Psoas muscle (tissue), 8 donors: ENCODE measurements at regions of chr20 and their contacts with region 1.

Region 1: GRCh38 chr20:58980700-58981627 is at the start of gene NELFCD:
- DNase-seq: peak; percentile 87 to 94
- ATAC-seq: peak; percentile 92 to 96 (median 94)
- H3K4me3 ChIP-seq: peak within 1 kb of the TSS; percentile 70
- H3K27ac ChIP-seq: peak within 1 kb of the TSS; percentile 93
- H3K4me1 ChIP-seq: peaks cover 35% of the 10 kb centered on the region
- H3K27me3 ChIP-seq: no peaks in the 10 kb centered on the region
- CTCF ChIP-seq: no peak
- total RNA-seq, gene NELFCD: 32.8 to 43.6 (median 34.2) TPM

Region 2: GRCh38 chr20:58890518-58891085 is 90.4 kb before region 1 on chr20:
- intact Hi-C with region 1: loop called (anchors 5 kb)
- DNase-seq: peak; percentile 85 to 88
- ATAC-seq: peak; percentile 49 to 58 (median 52)
- H3K4me3 ChIP-seq: peak overlapping the region; percentile 84
- H3K27ac ChIP-seq: peak overlapping the region; percentile 97
- H3K4me1 ChIP-seq: peaks cover 26% of the 10 kb centered on the region
- H3K27me3 ChIP-seq: no peaks in the 10 kb centered on the region
- CTCF ChIP-seq: no peak

Region 3: GRCh38 chr20:58895449-58896180 is 85.3 kb before region 1 on chr20:
- intact Hi-C with region 1: loop called (anchors 5 kb)
- DNase-seq: peak in 1 of 2 donors; percentile 64
- ATAC-seq: no peak
- H3K4me3 ChIP-seq: peak overlapping the region; percentile 26
- H3K27ac ChIP-seq: peak overlapping the region; percentile 50
- H3K4me1 ChIP-seq: peaks cover 75% of the 10 kb centered on the region
- H3K27me3 ChIP-seq: no peaks in the 10 kb centered on the region
- CTCF ChIP-seq: no peak

Region 4: DNA sequence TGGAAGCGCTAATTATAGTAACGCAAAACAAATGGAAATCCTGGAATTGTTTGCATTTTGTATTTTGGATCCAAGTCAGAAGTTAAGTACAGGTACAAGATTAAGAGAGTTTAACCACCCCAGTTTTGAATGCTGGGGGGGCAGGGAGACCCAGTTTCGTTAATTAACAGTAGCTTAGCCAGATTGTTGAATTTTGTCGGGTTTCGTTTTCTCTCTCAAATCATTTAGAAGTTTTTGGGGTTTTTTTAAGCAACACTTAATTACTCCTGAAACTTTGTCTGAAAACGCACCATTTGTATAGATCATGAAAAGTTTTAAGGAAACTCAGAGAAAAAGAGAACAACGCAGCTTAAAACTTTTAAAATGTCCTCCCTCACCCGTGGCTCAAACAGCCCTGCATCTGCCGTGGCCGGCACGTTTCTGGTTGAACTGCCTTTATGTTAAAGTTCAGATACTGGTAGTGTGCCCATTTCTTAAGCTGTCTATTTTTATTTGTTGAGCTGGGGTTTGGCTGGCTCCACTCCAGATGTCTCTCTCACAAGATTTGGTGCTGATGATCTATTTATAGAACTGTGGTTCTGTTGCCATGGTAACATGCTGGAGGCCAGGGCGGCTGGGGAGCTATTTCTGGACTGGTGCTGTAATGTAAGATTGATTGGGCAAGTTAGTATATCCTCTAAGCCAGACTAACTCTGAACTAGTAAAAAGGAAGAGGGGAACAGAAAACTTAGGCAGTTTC is 73.4 kb before region 1 on chr20:
- intact Hi-C with region 1: loop called in 1 of 2 experiments (anchors 5 kb)
- DNase-seq: peak; percentile 85 to 93
- ATAC-seq: peak; percentile 94 to 97 (median 96)
- H3K4me3 ChIP-seq: peak overlapping the region; percentile 50
- H3K27ac ChIP-seq: peak overlapping the region; percentile 88
- H3K4me1 ChIP-seq: peaks cover 48% of the 10 kb centered on the region
- H3K27me3 ChIP-seq: no peaks in the 10 kb centered on the region
- CTCF ChIP-seq: no peak

Region 5: DNA sequence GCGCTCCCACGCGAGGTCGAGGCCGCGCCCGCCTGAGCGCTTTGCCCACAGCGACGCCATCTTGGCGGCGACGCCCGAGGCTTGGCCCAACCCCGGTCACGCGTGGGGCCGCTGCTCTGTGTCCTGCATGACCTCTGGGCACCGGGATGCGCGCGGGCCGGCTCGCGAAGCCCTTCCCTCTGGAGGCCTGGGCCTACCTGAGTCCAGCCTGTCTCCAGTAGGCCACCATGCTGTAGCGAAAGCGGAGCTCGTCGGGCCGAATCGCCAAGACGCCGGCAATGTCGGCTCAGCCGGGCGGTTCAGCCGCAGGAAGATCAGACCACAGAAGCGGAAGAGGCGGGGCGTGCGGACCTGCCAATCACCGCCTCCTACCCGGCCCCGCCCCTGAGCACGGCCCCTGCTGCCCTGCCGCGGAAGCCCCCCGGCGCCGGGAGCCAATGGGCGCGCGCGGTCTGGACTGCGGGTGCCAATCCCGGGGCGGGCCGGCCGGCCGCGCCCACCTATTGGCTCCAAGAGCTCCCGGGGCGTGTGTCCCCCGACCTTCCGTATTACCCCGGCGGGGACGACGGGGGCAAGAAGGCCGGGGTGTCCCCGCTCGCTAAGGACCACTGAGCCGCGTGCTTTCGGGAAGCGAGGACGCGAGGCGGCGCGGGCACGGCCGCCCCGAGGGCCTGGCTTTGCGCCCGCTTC is 51.2 kb after region 1 on chr20 and contains the start of gene ATP5F1E:
- intact Hi-C with region 1: loop called in 1 of 2 experiments (anchors 5 kb)
- DNase-seq: peak; percentile 98
- ATAC-seq: peak; percentile 99 to 100 (median 100)
- H3K4me3 ChIP-seq: peak within 1 kb of the TSS; percentile 89
- H3K27ac ChIP-seq: peak within 1 kb of the TSS; percentile 92
- H3K4me1 ChIP-seq: peaks cover 37% of the 10 kb centered on the region
- H3K27me3 ChIP-seq: no peaks in the 10 kb centered on the region
- CTCF ChIP-seq: no peak
- total RNA-seq, gene ATP5F1E: 72.1 to 88.5 (median 87.1) TPM